Activated naive CD4-positive, alpha-beta T cell treated with anti-CD3 and anti-CD28 coated beads for 36 hours (primary cell): ENCODE measurements at regions of chr2 and their contacts with region 1.

Region 1: GRCh38 chr2:136117909-136118818 is at the start of gene CXCR4:
- DNase-seq: peak; percentile 82
- H3K4me3 Mint-ChIP-seq: peak within 1 kb of the TSS; percentile 95
- H3K27ac Mint-ChIP-seq: peak within 1 kb of the TSS; percentile 91
- H3K4me1 Mint-ChIP-seq: peaks cover 57% of the 10 kb centered on the region
- H3K27me3 Mint-ChIP-seq: no peaks in the 10 kb centered on the region
- total RNA-seq, gene CXCR4: 70.2 to 72.6 TPM

Region 2: DNA sequence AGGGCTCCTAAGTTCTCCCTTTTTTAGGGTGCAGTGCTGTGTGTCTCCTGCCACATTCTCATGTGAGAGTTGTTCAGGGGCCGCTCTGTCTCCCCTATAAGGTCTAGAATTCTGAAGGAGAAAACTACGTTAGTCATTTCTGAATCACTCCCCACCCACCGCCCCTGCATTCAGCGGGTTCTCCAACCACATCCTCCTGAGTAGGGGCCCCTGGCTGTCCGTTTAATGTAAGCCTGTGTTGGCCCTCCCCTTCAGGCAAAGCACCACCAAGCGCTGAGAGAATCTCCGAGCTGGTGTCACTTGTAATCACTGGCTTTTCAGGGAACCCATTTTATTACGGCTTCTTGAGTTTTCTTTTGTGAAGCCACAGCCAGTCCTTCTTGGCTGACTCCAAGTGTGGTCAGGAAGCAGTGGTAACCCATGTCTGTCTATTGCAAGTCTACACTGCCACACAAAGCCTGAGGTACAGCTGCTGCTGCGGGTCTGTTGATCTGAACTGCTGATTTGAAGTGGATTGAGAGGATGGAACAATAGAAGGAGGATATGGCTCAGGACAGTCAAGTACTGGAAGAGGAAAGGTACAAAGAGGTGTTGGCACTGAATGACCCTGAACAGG is 298.1 kb before region 1 on chr2:
- CTCF ChIA-PET with region 1: no interaction called
- intact Hi-C with region 1: loop called (anchors 2 kb)
- DNase-seq: peak; percentile 94
- H3K4me3 Mint-ChIP-seq: peak overlapping the region; percentile 64
- H3K27ac Mint-ChIP-seq: peak overlapping the region; percentile 79
- H3K4me1 Mint-ChIP-seq: peaks cover 48% of the 10 kb centered on the region
- H3K27me3 Mint-ChIP-seq: no peaks in the 10 kb centered on the region

Region 3: DNA sequence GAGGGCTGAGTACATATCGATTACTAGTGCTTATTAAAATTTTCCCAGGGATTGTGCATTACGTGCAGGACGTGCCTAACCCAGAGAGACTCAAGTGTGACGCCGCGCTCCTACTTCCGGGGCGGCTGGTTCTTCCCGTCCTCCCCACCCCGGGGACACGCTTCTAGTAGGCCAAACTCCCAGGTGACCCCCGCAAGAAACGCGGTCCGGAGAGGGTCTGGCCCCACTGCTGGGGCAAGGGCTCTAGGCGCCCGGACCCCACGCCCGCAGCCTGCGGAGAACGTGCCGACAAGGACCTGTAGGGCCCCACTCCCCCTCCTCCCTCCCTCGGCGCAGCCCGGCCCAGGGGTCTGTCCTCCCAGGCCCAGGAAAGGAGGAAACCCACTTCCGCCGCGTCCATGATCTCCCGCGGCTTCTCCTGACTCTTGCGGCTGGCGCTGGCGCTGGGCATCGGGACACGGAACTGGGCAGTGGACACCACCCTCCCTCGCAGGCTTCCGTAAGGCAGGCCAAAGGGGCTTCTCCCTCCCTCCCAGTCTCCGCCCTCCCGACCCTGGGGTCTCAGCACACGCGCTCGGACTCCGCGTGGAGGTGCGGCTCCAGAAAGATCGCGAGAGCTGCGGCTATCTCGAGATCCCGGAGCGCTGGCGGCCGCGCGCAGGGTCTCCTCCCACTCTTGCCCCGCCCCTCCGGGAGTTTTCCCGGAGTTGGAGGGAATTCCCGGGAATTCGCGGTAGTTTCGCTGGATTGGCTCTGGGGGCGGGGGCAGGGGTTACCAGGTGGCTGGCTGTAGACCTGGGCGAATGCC is 132.9 kb before region 1 on chr2 and contains the start of gene DARS1:
- CTCF ChIA-PET with region 1: interaction called, 4 read pairs
- intact Hi-C with region 1: loop called (anchors 1 kb)
- DNase-seq: peak; percentile 90
- H3K4me3 Mint-ChIP-seq: peak within 1 kb of the TSS; percentile 95
- H3K27ac Mint-ChIP-seq: peak within 1 kb of the TSS; percentile 97
- H3K4me1 Mint-ChIP-seq: peaks cover 39% of the 10 kb centered on the region
- H3K27me3 Mint-ChIP-seq: no peaks in the 10 kb centered on the region
- total RNA-seq, gene DARS1: 161 to 177 TPM

Region 4: GRCh38 chr2:136059036-136059472 is 59.1 kb before region 1 on chr2:
- CTCF ChIA-PET with region 1: no interaction called
- intact Hi-C with region 1: loop called (anchors 1 kb)
- DNase-seq: no peak
- H3K4me3 Mint-ChIP-seq: no peak overlapping the region
- H3K27ac Mint-ChIP-seq: no peak overlapping the region
- H3K4me1 Mint-ChIP-seq: peaks cover 59% of the 10 kb centered on the region
- H3K27me3 Mint-ChIP-seq: no peaks in the 10 kb centered on the region

Region 5: DNA sequence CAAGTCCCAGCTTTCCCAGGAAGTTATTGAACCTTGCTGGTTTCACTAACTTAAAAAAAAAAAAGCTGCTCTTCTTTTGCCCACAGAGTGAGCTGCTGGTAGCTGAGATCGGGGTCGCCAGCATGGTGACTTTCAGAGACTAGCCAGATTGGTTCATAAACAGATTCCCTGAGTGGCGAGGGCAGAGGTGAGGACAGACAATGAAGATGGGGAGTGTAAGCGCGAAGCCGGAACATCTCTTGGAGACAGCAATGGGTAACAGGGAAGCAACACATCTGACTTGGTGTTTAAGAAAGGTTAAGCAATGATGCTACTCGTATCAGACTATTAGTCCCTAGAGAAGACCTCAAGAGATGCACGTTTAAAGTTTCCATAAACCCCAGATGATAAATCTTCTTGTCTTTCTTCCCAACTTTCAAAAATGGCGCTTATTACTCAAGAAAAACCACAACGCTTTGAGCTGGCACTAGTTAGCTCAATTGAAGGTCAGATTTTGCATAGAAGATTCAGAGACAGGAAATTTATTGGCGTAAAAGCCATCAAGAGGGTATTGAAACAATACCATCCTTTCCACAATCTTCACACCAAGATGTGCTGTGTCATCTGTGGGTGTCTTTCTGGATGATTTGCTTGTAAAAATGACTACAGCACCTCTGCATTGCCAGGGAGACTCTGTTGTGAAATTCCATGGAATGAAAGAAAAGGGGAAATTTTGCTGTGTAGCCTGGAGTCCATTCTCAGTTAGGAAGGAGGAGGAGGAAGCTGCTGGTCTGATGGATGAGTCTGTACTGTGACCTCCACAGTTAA is 192.8 kb after region 1 on chr2:
- CTCF ChIA-PET with region 1: no interaction called
- intact Hi-C with region 1: loop called (anchors 1 kb)
- DNase-seq: peak; percentile 60
- H3K4me3 Mint-ChIP-seq: no peak overlapping the region
- H3K27ac Mint-ChIP-seq: peak overlapping the region; percentile 82
- H3K4me1 Mint-ChIP-seq: peaks cover 18% of the 10 kb centered on the region
- H3K27me3 Mint-ChIP-seq: no peaks in the 10 kb centered on the region

Region 6: DNA sequence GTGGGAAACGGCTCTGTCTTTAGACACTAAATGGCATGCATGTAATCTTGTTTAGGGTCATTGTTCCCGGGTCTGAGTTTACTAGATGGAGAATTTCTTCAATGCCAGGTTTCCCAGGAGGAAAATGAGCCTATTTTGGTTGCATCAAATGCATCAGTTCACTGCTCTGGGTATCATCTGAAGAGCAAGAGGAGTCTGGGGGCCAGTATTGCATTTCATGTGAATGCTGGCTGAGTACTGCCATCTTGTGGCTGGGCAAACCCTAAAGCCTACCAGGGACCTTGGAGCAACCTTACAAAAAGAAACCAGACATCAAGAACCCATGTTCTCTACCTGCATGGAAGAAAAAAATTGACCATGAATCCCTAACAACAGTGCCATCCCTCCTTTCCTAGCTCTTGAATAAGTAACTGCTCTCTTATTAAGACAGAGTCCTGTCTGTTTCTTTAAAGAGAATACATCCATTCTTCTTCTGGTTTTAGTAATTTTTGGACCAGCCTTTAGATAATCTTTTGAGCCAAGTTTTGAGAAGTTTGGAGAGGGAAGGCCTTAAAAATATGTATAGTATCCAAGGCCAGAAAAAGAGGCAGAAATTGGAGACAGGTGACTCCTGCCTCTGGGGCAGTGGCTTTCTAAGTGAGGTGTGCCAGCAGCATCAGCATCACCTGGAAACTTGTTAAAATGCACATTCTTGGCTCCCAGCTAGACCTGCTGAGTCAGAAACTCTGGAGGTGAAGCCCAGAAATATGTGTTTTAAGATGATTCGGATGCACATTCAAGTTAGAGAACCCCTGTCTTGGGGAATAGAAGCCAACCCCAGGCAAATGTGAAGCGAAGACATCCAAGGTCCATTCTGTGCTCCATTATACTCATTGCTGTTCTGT is 260.8 kb after region 1 on chr2:
- CTCF ChIA-PET with region 1: interaction called, 4 read pairs
- intact Hi-C with region 1: loop called (anchors 1 kb)
- DNase-seq: peak; percentile 90
- H3K4me3 Mint-ChIP-seq: no peak overlapping the region
- H3K27ac Mint-ChIP-seq: no peak overlapping the region
- H3K4me1 Mint-ChIP-seq: peaks cover 79% of the 10 kb centered on the region
- H3K27me3 Mint-ChIP-seq: no peaks in the 10 kb centered on the region